Activated T-helper 2 cell treated with anti-CD3 and anti-CD28 coated beads, Interferon-gamma antibody, Interleukin-2, Interleukin-4, amounts not matched to agents 10 μg/mL and 5 μg/mL and 100 μg/mL, durations not matched to agents 14 hours and 24 hours and 36 hours (primary cell): ENCODE measurements at regions of chr6 and their contacts with region 1.

Region 1: GRCh38 chr6:14876778-14877613 is 368.9 kb upstream of the JARID2 start:
- DNase-seq: peak; percentile 22
- H3K4me3 Mint-ChIP-seq: peak overlapping the region; percentile 60
- H3K27ac Mint-ChIP-seq: peak overlapping the region; percentile 91
- H3K4me1 Mint-ChIP-seq: peaks cover 65% of the 10 kb centered on the region
- H3K27me3 Mint-ChIP-seq: no peaks in the 10 kb centered on the region

Region 2: GRCh38 chr6:14423330-14423729 is 453.7 kb before region 1 on chr6:
- intact Hi-C with region 1: loop called (anchors 1 kb)
- DNase-seq: no peak
- H3K4me3 Mint-ChIP-seq: no peak overlapping the region
- H3K27ac Mint-ChIP-seq: peak overlapping the region; percentile 78
- H3K4me1 Mint-ChIP-seq: peaks cover 42% of the 10 kb centered on the region
- H3K27me3 Mint-ChIP-seq: no peaks in the 10 kb centered on the region

Region 3: GRCh38 chr6:14711056-14711703 is 165.8 kb before region 1 on chr6:
- intact Hi-C with region 1: loop called (anchors 1 kb)
- DNase-seq: peak; percentile 63
- H3K4me3 Mint-ChIP-seq: peak overlapping the region; percentile 75
- H3K27ac Mint-ChIP-seq: peak overlapping the region; percentile 99
- H3K4me1 Mint-ChIP-seq: peaks cover 60% of the 10 kb centered on the region
- H3K27me3 Mint-ChIP-seq: no peaks in the 10 kb centered on the region

Region 4: DNA sequence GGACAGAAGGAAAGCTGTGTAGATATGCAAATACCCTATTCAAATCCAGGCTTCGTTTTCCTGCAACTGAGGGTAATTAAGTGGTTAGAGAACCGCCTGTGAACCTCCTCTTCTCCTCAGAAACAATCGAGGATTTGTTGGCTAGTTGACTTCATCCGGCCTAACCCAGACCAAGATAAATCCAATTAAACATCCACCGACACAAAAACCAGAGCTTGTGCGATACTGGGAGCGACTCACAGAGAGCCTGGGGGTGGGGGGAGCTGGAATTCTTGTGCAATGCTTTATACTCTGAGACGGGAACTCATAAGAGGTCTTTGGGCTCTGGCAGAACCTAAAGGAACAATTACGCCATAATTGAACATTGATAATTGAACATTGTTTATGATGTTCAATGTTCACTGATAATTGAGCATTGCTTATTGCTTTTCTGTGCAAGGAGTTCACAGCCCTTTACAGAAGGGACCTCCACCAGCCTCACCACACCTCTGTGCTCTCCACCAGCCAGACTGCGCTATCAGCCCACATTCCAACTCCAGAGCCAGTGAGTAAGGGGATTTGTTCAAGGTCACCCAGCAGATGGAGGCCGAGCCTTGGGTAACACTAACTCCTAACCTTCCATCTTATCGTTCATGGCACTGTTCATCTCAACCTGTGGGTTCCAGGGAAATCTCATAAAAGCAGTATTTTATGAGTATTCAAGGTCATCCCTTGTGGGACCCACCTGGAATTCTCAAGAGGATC is 60.7 kb before region 1 on chr6:
- intact Hi-C with region 1: loop called (anchors 1 kb)
- DNase-seq: no peak
- H3K4me3 Mint-ChIP-seq: no peak overlapping the region
- H3K27ac Mint-ChIP-seq: no peak overlapping the region
- H3K4me1 Mint-ChIP-seq: peaks cover 17% of the 10 kb centered on the region
- H3K27me3 Mint-ChIP-seq: no peaks in the 10 kb centered on the region

Region 5: GRCh38 chr6:15023448-15023847 is 146.5 kb after region 1 on chr6:
- intact Hi-C with region 1: loop called (anchors 1 kb)
- DNase-seq: peak; percentile 28
- H3K4me3 Mint-ChIP-seq: no peak overlapping the region
- H3K27ac Mint-ChIP-seq: peak overlapping the region; percentile 91
- H3K4me1 Mint-ChIP-seq: peaks cover 37% of the 10 kb centered on the region
- H3K27me3 Mint-ChIP-seq: no peaks in the 10 kb centered on the region

Region 6: GRCh38 chr6:15245361-15246216 is 368.6 kb after region 1 on chr6 and contains the start of gene JARID2:
- intact Hi-C with region 1: loop called (anchors 1 kb)
- DNase-seq: peak; percentile 93
- H3K4me3 Mint-ChIP-seq: peak within 1 kb of the TSS; percentile 99
- H3K27ac Mint-ChIP-seq: peak within 1 kb of the TSS; percentile 99
- H3K4me1 Mint-ChIP-seq: peaks cover 30% of the 10 kb centered on the region
- H3K27me3 Mint-ChIP-seq: no peaks in the 10 kb centered on the region
- total RNA-seq, gene JARID2: 55.9 and 57.7 TPM in 2 replicates